Transverse colon (tissue), 4 donors: ENCODE measurements at regions of chr11 and their contacts with region 1.

Region 1: DNA sequence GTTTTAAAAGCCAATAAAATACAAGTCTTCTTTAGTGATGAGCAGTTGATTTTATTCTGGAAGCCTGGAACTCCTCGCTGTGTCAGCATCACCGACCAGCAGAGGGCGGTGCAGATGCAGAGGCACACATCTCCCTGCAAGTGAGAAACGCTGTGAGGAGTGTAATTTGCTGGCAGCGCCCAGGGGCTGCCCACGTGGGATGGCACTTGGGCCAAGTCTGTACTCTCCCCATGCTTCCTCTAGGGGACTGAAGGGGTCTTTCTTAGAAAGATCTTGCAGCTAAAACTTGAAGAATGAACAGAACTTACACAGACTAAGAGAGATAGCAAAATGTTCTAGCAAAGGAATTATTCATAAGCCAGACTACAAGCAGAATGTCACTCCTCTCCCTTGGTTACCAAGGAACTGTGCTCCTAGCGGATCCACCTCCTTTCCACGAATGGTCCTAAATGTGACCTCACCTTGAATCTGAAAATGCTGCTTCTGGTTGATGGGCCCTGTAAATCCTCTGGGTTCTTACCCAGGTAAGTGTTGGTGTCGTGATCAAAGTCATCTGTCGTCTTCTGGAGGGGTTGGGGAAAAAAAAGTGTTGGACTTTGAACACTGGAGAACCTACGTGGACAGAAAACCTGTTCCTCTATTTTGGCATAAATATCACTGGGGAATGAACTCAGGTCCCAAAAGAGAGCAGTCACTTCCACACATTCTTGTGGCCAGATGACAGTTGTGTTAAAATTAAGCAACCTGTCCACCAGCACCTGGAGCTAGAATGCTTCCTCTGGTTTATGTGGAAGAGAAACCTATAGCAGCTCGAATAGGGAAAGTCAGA is 31.8 kb downstream of the CNTF start:
- DNase-seq: peak; percentile 81
- H3K4me3 ChIP-seq: no peak overlapping the region
- H3K27ac ChIP-seq: no peak overlapping the region
- H3K4me1 ChIP-seq: peaks cover 0 to 6% (median 4%) of the 10 kb centered on the region in 4 donors
- H3K27me3 ChIP-seq: no peaks in the 10 kb centered on the region
- CTCF ChIP-seq: peak; percentile 76 to 88 (median 85)
- EP300 ChIP-seq: no peak
- POLR2A ChIP-seq: no peak

Region 2: GRCh38 chr11:58900479-58901420 is 246.5 kb after region 1 on chr11:
- in situ Hi-C with region 1: loop called in 3 of 4 experiments (anchors 25 kb)
- intact Hi-C with region 1: no loop called
- DNase-seq: peak; percentile 82
- H3K4me3 ChIP-seq: no peak overlapping the region
- H3K27ac ChIP-seq: no peak overlapping the region
- H3K4me1 ChIP-seq: peaks cover 4 to 7% (median 5%) of the 10 kb centered on the region in 4 donors
- H3K27me3 ChIP-seq: peaks cover 25% of the 10 kb centered on the region
- CTCF ChIP-seq: peak; percentile 34 to 65 (median 49)
- EP300 ChIP-seq: no peak
- POLR2A ChIP-seq: no peak

Region 3: GRCh38 chr11:59028105-59028504 is 373.8 kb after region 1 on chr11:
- in situ Hi-C with region 1: no loop called
- intact Hi-C with region 1: no loop called
- DNase-seq: no peak
- H3K4me3 ChIP-seq: no peak overlapping the region
- H3K27ac ChIP-seq: no peak overlapping the region
- H3K4me1 ChIP-seq: peaks cover 0 to 21% (median 5%) of the 10 kb centered on the region in 4 donors
- H3K27me3 ChIP-seq: no peaks in the 10 kb centered on the region
- CTCF ChIP-seq: no peak
- EP300 ChIP-seq: no peak
- POLR2A ChIP-seq: no peak

Region 4: DNA sequence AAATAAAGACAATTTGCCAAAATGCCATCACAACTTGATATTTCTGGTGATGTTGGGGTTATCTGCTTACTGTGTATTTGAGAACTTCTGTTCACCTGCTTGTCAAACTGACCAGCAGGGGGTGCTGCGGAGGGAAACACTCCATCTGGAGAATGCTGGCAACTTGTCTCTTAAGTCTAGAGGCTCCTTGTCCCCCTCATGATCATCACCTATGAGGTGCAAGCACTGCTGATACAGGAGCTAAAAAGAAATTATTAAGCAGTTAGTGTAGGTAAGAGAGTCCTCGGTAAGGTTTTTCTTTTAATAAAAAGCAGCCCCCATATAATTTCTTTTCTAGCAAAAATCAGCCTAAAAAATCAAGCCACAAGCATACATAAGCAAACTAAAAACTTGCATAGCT is 399.1 kb after region 1 on chr11:
- in situ Hi-C with region 1: loop called in 1 of 4 experiments (anchors 25 kb)
- intact Hi-C with region 1: no loop called
- DNase-seq: peak; percentile 74
- H3K4me3 ChIP-seq: no peak overlapping the region
- H3K27ac ChIP-seq: no peak overlapping the region
- H3K4me1 ChIP-seq: peaks cover 0 to 7% (median 6%) of the 10 kb centered on the region in 4 donors
- H3K27me3 ChIP-seq: no peaks in the 10 kb centered on the region
- CTCF ChIP-seq: peak; percentile 46 to 80 (median 59)
- EP300 ChIP-seq: no peak
- POLR2A ChIP-seq: no peak